Activated CD4-positive, alpha-beta memory T cell treated with anti-CD3 and anti-CD28 coated beads for 36 hours (primary cell): ENCODE measurements at regions of chr17 and their contacts with region 1.

Region 1: DNA sequence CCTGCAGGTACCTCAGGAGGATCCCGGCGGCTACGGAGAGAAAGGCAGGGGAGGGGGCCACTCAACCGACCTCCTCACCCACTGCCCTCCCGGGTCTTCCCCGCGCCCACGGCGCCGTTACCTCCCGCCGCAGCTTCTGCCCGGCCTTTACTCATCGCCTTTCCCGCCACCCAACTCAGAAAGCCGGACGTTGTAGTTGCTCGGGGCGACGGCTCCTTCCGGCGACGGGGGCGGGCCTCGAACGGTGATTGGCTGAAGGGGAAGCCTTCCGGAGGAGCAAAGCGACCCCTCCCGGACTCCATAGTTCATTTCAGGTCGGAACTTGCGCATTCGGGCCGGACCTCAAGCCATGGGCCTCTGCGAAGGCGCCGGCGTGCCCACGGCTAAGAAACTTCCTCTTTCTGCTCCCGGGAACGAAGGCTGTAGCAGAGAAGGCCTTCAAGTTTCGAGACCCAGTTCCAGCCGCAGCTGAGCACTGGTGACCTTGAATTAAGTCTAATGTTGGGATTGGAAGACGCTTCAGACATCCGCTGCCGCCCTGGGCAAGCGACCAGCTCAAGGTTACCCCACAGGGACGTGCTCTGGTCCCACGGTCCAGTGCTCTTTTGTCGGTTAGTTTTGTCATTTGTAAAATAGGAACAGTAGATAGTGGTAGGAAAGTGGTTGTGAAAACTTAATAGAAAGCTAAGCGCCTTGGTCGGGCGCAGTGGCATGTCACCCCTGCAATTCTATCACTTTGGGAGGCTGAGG is at the start of gene PSMC3IP:
- DNase-seq: peak; percentile 98
- H3K4me3 Mint-ChIP-seq: peak within 1 kb of the TSS; percentile 91
- H3K27ac Mint-ChIP-seq: peak within 1 kb of the TSS; percentile 97
- H3K4me1 Mint-ChIP-seq: peaks cover 28% of the 10 kb centered on the region
- H3K27me3 Mint-ChIP-seq: no peaks in the 10 kb centered on the region
- total RNA-seq, gene PSMC3IP: 26.4 to 29.4 TPM

Region 2: GRCh38 chr17:42536048-42536371 is 41.7 kb before region 1 on chr17 and contains the start of gene NAGLU:
- CTCF ChIA-PET with region 1: interaction called, 10 read pairs
- POLR2A ChIA-PET with region 1: interaction called, 3 read pairs
- intact Hi-C with region 1: no loop called
- DNase-seq: peak; percentile 91
- H3K4me3 Mint-ChIP-seq: peak within 1 kb of the TSS; percentile 87
- H3K27ac Mint-ChIP-seq: peak within 1 kb of the TSS; percentile 74
- H3K4me1 Mint-ChIP-seq: peaks cover 32% of the 10 kb centered on the region
- H3K27me3 Mint-ChIP-seq: peaks cover 4% of the 10 kb centered on the region
- total RNA-seq, gene NAGLU: 12.2 to 13.9 TPM

Region 3: DNA sequence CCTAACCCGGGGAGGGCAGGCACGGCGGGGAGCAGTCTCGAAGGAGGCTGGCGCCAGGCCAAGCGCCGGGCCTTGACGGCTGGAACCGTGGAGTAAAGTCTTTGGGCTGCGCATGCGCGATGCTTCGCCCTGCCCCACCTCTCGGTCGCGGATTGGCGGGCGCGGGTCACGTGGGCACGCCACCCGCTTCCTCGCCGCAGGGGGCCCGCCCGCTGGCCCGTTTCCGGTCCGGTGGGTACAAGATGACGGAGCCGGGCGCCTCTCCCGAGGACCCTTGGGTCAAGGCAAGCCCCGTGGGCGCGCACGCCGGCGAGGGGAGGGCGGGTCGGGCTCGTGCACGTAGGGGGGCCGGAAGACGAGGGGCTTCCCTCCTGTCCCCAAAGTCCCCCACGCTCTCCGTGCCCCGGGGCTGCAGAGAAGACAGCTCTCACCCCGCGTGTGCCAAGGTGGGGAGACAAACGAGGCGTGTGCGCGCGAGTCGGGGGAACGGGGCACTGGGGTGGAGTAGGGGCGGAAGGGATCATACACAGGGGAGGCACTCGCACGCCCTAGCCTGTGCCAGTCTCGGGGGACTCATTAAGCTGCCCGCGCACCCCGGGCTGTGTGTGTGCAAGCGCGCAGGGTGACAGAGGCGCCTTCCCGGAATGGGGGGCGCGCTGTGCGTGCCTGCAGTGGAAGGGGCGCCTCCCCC is 10.7 kb before region 1 on chr17 and contains the start of gene MLX:
- CTCF ChIA-PET with region 1: interaction called, 50 read pairs
- POLR2A ChIA-PET with region 1: interaction called, 38 read pairs
- intact Hi-C with region 1: loop called (anchors 2 kb)
- DNase-seq: peak; percentile 95
- H3K4me3 Mint-ChIP-seq: peak within 1 kb of the TSS; percentile 96
- H3K27ac Mint-ChIP-seq: peak within 1 kb of the TSS; percentile 96
- H3K4me1 Mint-ChIP-seq: peaks cover 41% of the 10 kb centered on the region
- H3K27me3 Mint-ChIP-seq: no peaks in the 10 kb centered on the region
- total RNA-seq, gene MLX: 38.4 to 39.7 TPM

Region 4: GRCh38 chr17:42609182-42609813 is 31.6 kb after region 1 on chr17 and contains the starts of genes RETREG3 and TUBG1:
- CTCF ChIA-PET with region 1: interaction called, 42 read pairs
- POLR2A ChIA-PET with region 1: interaction called, 22 read pairs
- intact Hi-C with region 1: loop called (anchors 1 kb)
- DNase-seq: peak; percentile 100
- H3K4me3 Mint-ChIP-seq: peak within 1 kb of the TSS; percentile 99
- H3K27ac Mint-ChIP-seq: peak within 1 kb of the TSS; percentile 91
- H3K4me1 Mint-ChIP-seq: peaks cover 41% of the 10 kb centered on the region
- H3K27me3 Mint-ChIP-seq: no peaks in the 10 kb centered on the region
- total RNA-seq, gene RETREG3: 33.7 to 35.3 TPM
- total RNA-seq, gene TUBG1: 92.6 to 101 TPM

Region 5: GRCh38 chr17:42677008-42677857 is 99.5 kb after region 1 on chr17:
- CTCF ChIA-PET with region 1: interaction called, 58 read pairs
- POLR2A ChIA-PET with region 1: interaction called, 4 read pairs
- intact Hi-C with region 1: loop called (anchors 1 kb)
- DNase-seq: peak; percentile 100
- H3K4me3 Mint-ChIP-seq: peak overlapping the region; percentile 76
- H3K27ac Mint-ChIP-seq: peak overlapping the region; percentile 71
- H3K4me1 Mint-ChIP-seq: peaks cover 54% of the 10 kb centered on the region
- H3K27me3 Mint-ChIP-seq: peaks cover 41% of the 10 kb centered on the region

Region 6: DNA sequence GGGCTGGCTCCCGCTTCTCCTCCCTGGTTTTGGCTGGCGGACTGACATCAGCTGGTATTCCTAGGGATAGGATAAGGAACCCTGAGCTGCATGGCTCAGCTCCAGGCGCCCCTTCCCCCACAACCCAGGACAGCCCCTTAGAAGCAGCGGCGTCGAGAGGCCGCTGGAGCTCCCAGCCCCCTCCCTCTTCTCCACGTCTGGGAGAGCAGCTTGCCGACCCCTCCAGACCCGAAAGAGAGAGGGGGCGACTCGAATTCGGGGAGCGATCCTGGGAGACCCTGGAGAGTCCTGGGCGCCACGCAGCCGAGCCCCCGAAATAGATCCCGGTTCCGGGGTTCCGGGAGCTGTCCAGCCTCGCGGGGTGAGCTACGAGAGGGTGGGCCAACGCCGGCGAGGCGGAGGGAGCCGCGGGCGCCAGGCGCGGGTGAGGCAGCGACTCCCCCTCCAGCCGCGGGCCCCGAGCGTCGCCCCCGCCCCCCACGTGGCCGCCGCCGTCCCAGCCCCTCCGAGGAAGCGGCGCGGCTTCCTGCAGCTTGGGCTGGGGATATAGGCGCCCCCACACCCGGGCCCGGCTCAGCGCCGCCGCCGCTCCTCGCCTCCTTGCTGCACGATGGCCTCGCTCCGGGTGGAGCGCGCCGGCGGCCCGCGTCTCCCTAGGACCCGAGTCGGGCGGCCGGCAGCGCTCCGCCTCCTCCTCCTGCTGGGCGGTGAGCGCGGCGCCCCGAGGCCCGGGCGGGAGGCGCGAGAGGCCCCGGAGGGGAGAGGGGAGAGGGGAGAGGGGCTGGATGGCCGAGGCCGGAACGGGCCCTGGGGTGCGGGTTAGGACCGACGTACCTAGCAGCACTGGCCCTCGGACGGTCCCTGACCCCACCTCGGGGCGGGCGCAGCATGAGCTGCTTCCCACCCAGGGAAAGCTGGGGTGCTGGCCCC is 183.2 kb after region 1 on chr17 and contains the start of gene RAMP2:
- CTCF ChIA-PET with region 1: interaction called, 90 read pairs
- POLR2A ChIA-PET with region 1: no interaction called
- intact Hi-C with region 1: loop called (anchors 1 kb)
- DNase-seq: no peak
- H3K4me3 Mint-ChIP-seq: no peak within 1 kb of the TSS
- H3K27ac Mint-ChIP-seq: no peak within 1 kb of the TSS
- H3K4me1 Mint-ChIP-seq: peaks cover 5% of the 10 kb centered on the region
- H3K27me3 Mint-ChIP-seq: peaks cover 49% of the 10 kb centered on the region
- total RNA-seq, gene RAMP2: not detected

Region 7: GRCh38 chr17:42937712-42938596 is 360.2 kb after region 1 on chr17:
- CTCF ChIA-PET with region 1: interaction called, 10 read pairs
- POLR2A ChIA-PET with region 1: no interaction called
- intact Hi-C with region 1: no loop called
- DNase-seq: peak; percentile 44
- H3K4me3 Mint-ChIP-seq: no peak overlapping the region
- H3K27ac Mint-ChIP-seq: no peak overlapping the region
- H3K4me1 Mint-ChIP-seq: no peaks in the 10 kb centered on the region
- H3K27me3 Mint-ChIP-seq: peaks cover 3% of the 10 kb centered on the region